Activated naive CD4-positive, alpha-beta T cell treated with anti-CD3 and anti-CD28 coated beads for 36 hours (primary cell): ENCODE measurements at regions of chr14 and their contacts with region 1.

Region 1: GRCh38 chr14:50342221-50343078 is 30.3 kb downstream of the DMAC2L start:
- DNase-seq: peak; percentile 79
- H3K4me3 Mint-ChIP-seq: no peak overlapping the region
- H3K27ac Mint-ChIP-seq: no peak overlapping the region
- H3K4me1 Mint-ChIP-seq: peaks cover 26% of the 10 kb centered on the region
- H3K27me3 Mint-ChIP-seq: no peaks in the 10 kb centered on the region

Region 2: DNA sequence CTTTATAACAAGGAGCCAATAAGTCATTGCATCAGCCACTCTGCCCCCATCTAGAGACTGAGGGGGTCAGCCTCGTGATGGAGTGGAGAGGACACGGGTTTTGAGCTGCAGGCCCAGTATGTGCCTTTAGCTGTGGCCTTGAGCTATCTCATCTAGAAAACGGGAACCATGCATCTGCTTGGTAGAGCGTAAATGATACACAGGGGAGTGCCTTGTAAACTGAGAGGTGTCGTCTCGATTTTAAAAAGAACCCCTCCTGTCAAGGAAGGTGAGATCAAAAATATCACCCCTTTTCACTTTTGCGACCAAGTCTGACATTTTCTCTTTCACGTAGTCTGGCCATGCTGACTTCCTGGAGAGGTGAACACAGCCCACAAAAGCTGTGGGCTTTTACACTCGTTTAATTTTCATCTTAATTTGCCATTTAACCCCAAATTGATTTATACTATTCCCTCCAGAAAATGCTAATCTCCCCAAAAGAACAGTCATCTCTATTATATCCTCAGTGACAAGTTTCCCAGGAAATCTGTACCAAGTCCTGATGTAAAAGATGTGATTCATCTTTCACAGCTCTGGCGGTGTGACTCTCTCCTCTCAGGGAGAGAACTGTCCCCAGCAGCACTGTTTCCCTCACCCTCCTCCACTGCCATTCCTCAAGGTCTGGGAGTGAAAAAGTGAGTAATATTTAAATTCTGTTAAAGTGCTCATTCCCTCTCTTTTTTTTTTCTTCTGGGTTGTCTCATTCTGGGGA is 256.7 kb before region 1 on chr14:
- CTCF ChIA-PET with region 1: no interaction called
- intact Hi-C with region 1: no loop called
- DNase-seq: peak; percentile 77
- H3K4me3 Mint-ChIP-seq: peak overlapping the region; percentile 6
- H3K27ac Mint-ChIP-seq: peak overlapping the region; percentile 83
- H3K4me1 Mint-ChIP-seq: peaks cover 93% of the 10 kb centered on the region
- H3K27me3 Mint-ChIP-seq: no peaks in the 10 kb centered on the region

Region 3: DNA sequence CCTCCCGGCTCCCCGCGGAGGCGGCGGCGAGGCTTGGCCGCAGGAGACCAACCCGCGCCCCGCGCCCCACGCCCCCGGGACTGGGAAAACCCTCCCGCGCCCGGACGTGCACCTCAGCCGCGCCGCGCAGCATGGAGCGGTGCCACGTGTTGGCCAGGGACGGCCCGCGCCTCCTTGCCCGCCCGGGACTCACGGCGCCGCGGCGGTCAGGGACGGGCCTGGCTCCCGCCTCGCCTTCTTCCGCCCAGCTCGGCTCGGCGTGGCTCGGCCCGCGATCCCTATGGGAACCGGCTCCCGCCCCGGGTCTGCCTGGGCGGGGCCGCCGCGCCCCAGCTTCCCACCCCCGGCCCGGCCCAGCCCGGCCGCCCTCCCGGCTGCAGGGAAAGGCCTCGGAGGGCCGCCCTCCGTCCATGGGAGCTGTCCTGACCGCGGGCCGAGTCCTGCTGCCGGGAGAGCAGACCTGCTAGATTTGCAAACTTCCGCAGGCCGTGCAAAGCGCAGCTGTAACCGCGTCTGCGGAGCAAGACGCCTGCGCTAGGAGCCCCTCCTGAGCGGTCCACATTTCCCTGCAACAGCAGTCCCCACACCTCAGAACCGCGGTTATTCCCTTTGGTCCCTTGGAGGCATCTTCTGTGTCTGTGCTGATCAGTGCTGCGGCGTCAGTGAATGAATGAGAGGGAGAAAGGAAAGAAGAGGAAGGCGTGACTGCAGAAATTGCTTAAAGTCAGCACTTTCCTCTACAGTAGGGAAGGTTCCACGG is 54.4 kb after region 1 on chr14 and contains the start of gene CDKL1:
- CTCF ChIA-PET with region 1: interaction called, 3 read pairs
- intact Hi-C with region 1: loop called (anchors 1 kb)
- DNase-seq: peak; percentile 53
- H3K4me3 Mint-ChIP-seq: peak within 1 kb of the TSS; percentile 83
- H3K27ac Mint-ChIP-seq: peak within 1 kb of the TSS; percentile 59
- H3K4me1 Mint-ChIP-seq: peaks cover 13% of the 10 kb centered on the region
- H3K27me3 Mint-ChIP-seq: peaks cover 2% of the 10 kb centered on the region
- total RNA-seq, gene CDKL1: 1.5 to 2.0 TPM

Region 4: GRCh38 chr14:50532502-50533240 is 190.2 kb after region 1 on chr14 and contains the start of gene MAP4K5:
- CTCF ChIA-PET with region 1: interaction called, 5 read pairs
- intact Hi-C with region 1: loop called (anchors 1 kb)
- DNase-seq: peak; percentile 89
- H3K4me3 Mint-ChIP-seq: peak within 1 kb of the TSS; percentile 85
- H3K27ac Mint-ChIP-seq: peak within 1 kb of the TSS; percentile 72
- H3K4me1 Mint-ChIP-seq: peaks cover 45% of the 10 kb centered on the region
- H3K27me3 Mint-ChIP-seq: no peaks in the 10 kb centered on the region
- total RNA-seq, gene MAP4K5: 10.2 to 11.2 TPM

Region 5: GRCh38 chr14:50726372-50727107 is 384.1 kb after region 1 on chr14:
- CTCF ChIA-PET with region 1: no interaction called
- intact Hi-C with region 1: loop called (anchors 1 kb)
- DNase-seq: peak; percentile 48
- H3K4me3 Mint-ChIP-seq: peak overlapping the region; percentile 3
- H3K27ac Mint-ChIP-seq: peak overlapping the region; percentile 83
- H3K4me1 Mint-ChIP-seq: peaks cover 28% of the 10 kb centered on the region
- H3K27me3 Mint-ChIP-seq: no peaks in the 10 kb centered on the region

Region 6: GRCh38 chr14:50778721-50779483 is 436.5 kb after region 1 on chr14:
- CTCF ChIA-PET with region 1: no interaction called
- intact Hi-C with region 1: loop called (anchors 2 kb)
- DNase-seq: no peak
- H3K4me3 Mint-ChIP-seq: no peak overlapping the region
- H3K27ac Mint-ChIP-seq: no peak overlapping the region
- H3K4me1 Mint-ChIP-seq: peaks cover 32% of the 10 kb centered on the region
- H3K27me3 Mint-ChIP-seq: no peaks in the 10 kb centered on the region

Region 7: GRCh38 chr14:51094901-51095853 is 752.7 kb after region 1 on chr14 and contains the start of gene TRIM9:
- CTCF ChIA-PET with region 1: no interaction called
- intact Hi-C with region 1: loop called (anchors 10 kb)
- DNase-seq: peak; percentile 95
- H3K4me3 Mint-ChIP-seq: peak within 1 kb of the TSS; percentile 86
- H3K27ac Mint-ChIP-seq: peak within 1 kb of the TSS; percentile 65
- H3K4me1 Mint-ChIP-seq: peaks cover 12% of the 10 kb centered on the region
- H3K27me3 Mint-ChIP-seq: peaks cover 13% of the 10 kb centered on the region
- total RNA-seq, gene TRIM9: 0.76 to 1.1 TPM

Region 8: GRCh38 chr14:51638071-51638944 is 1295.9 kb after region 1 on chr14:
- CTCF ChIA-PET with region 1: no interaction called
- intact Hi-C with region 1: no loop called
- DNase-seq: no peak
- H3K4me3 Mint-ChIP-seq: no peak overlapping the region
- H3K27ac Mint-ChIP-seq: no peak overlapping the region
- H3K4me1 Mint-ChIP-seq: no peaks in the 10 kb centered on the region
- H3K27me3 Mint-ChIP-seq: peaks cover 20% of the 10 kb centered on the region